ENCODE measurements at regions of chr18 and their contacts with region 1.

Region 1: GRCh38 chr18:47100214-47100831 is 50.0 kb downstream of the HDHD2 start:
- DNase-seq: peak; percentile 28 to 77 (median 54)
- H3K4me3 ChIP-seq: no peak overlapping the region
- H3K27ac ChIP-seq: no peak overlapping the region
- H3K27me3 ChIP-seq: no peaks in the 10 kb centered on the region
- CTCF ChIP-seq: peak; percentile 49 to 88 (median 77)

Region 2: DNA sequence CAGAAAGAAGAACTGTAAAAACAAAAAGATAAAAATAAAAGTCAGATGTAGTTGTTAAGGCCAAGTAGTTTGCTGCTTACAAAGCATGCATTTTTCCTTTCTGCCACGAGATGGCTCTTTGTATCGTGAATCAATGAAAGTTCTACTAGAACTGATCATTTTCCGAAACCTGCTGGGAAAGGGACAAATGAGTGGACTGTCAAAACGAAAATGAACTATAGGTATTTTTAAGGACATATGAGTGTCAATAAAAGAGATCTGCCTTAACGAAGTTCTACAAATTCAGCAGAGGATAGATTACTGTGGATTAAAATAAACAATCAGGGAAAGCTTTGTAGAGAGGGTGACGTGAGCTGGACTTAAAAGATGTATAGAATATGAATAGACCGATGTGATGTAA is 49.9 kb before region 1 on chr18:
- intact Hi-C with region 1: loop called in 1 of 2 experiments (anchors 5 kb)
- DNase-seq: peak in 1 of 10 donors; percentile 21
- H3K4me3 ChIP-seq: peak overlapping the region in 3 of 59 donors; percentile 9 to 29 (median 20)
- H3K27ac ChIP-seq: no peak overlapping the region
- H3K27me3 ChIP-seq: no peaks in the 10 kb centered on the region
- CTCF ChIP-seq: peak; percentile 53 to 90 (median 72)

Region 3: GRCh38 chr18:47204908-47205522 is 104.7 kb after region 1 on chr18:
- intact Hi-C with region 1: loop called (anchors 1 to 5 kb)
- DNase-seq: peak in 1 of 10 donors; percentile 45
- H3K4me3 ChIP-seq: no peak overlapping the region
- H3K27ac ChIP-seq: no peak overlapping the region
- H3K27me3 ChIP-seq: peaks cover 0 to 23% (median 1%) of the 10 kb centered on the region in 45 donors
- CTCF ChIP-seq: peak in 55 of 56 donors; percentile 26 to 87 (median 73)

Region 4: DNA sequence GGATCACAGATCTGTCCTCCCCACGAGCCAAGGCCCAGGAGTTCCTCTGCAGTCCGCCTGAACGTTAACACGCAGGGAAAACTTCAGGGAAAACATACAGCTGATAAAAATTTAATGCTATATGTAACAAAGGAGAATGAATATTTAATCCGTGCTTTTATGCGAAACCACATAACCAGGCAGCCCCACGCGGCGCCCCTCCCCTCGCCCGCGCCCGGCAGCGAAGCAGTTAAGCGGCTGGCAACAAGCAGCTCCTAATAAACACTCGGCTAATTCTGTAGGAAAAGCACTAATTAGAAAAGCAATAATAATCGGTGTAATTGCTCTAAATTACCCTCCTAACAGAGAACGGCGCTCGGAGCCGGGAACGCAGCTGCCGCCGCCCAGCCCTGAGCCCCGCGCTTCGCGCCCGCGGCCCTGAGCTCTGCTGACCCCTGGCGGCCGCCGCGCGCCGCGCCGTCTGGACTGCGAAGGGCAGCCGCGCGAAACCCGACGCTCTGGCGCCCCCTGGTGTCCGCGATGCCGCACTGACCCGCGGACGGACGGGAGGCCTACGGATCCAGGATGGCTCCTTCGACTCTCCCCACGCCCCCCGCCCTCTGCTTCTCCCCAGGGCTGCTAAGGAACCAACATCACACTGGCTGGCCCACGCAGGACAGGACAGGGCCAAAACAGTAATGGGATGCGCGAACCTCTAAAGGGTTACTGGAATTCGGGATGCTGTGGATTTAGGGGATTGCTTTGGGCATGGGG is 648.7 kb after region 1 on chr18:
- intact Hi-C with region 1: loop called (anchors 5 to 10 kb)
- DNase-seq: peak in 9 of 10 donors; percentile 58 to 86 (median 70)
- H3K4me3 ChIP-seq: peak overlapping the region in 58 of 59 donors; percentile 17 to 66 (median 47)
- H3K27ac ChIP-seq: no peak overlapping the region
- H3K27me3 ChIP-seq: peaks cover 0 to 7% (median 0%) of the 10 kb centered on the region in 45 donors
- CTCF ChIP-seq: peak; percentile 85 to 100 (median 100)

Region 5: DNA sequence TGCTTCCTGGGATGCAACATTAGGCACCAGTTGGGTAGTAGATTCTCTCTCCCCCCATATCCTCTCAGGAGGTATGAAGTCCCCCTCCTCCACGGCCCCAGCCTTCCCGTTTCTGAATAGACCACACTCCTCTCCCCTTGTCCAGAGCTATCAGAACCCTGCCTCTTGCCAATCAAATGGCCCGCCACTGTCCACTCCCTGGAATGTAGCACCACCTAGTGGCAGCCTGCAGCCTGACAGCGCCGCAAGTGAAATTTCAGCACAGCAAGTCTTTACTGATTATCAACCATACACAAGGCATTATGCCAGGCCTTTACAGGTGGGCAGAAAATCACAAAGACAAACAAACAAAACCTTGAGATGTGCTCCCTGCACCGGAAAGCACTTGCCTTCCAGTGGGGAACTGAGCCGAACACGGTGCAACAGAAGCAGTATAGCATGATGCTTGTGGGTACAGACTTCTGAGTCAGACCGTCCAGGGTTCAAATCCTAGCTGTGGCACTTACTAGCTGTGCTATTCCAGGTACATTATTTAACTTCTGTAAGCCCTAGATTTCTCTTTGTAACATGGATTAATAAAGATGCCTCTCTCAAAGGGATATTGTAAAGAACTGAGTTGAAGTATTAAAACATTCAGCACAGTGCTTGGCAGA is 656.2 kb after region 1 on chr18:
- intact Hi-C with region 1: loop called in 1 of 2 experiments (anchors 10 kb)
- DNase-seq: peak in 9 of 10 donors; percentile 24 to 75 (median 58)
- H3K4me3 ChIP-seq: no peak overlapping the region
- H3K27ac ChIP-seq: no peak overlapping the region
- H3K27me3 ChIP-seq: peaks cover 0 to 21% (median 0%) of the 10 kb centered on the region in 45 donors
- CTCF ChIP-seq: peak; percentile 52 to 92 (median 84)

Measured in dorsolateral prefrontal cortex (tissue), 120 donors.